ENCODE measurements at regions of chr16 and their contacts with region 1.

Region 1: GRCh38 chr16:47162670-47163420 is 19.1 kb upstream of the NETO2 start:
- DNase-seq: no peak
- ATAC-seq: no peak
- H3K4me3 ChIP-seq: no peak overlapping the region
- H3K27ac ChIP-seq: no peak overlapping the region
- H3K4me1 ChIP-seq: no peaks in the 10 kb centered on the region
- H3K27me3 ChIP-seq: no peaks in the 10 kb centered on the region
- CTCF ChIP-seq: peak in 3 of 9 donors; percentile 11 to 23 (median 12)

Region 2: GRCh38 chr16:47110939-47111338 is 51.9 kb before region 1 on chr16:
- intact Hi-C with region 1: no loop called
- DNase-seq: no peak
- ATAC-seq: no peak
- H3K4me3 ChIP-seq: no peak overlapping the region
- H3K27ac ChIP-seq: no peak overlapping the region
- H3K4me1 ChIP-seq: no peaks in the 10 kb centered on the region
- H3K27me3 ChIP-seq: no peaks in the 10 kb centered on the region
- CTCF ChIP-seq: no peak

Region 3: DNA sequence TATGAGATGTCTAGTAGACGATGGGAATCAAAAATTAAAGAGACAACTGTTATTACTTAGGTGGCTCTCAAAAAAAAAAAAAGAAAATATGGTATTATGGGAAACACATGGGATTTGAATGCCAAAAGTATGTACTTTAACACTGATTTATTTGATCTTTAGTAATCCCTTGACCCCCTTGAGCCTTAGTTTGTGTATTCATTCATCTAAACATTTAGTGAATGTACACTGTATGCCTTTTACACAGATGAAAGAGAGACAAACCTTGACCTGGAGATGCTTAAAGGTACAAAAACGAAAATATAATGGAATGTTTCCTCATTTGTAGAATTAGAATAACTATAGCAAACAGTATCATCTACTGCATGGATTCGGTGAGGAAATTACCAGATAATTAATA is 19.5 kb after region 1 on chr16:
- intact Hi-C with region 1: loop called in 1 of 10 experiments (anchors 2 kb)
- DNase-seq: no peak
- ATAC-seq: no peak
- H3K4me3 ChIP-seq: no peak overlapping the region
- H3K27ac ChIP-seq: no peak overlapping the region
- H3K4me1 ChIP-seq: no peaks in the 10 kb centered on the region
- H3K27me3 ChIP-seq: no peaks in the 10 kb centered on the region
- CTCF ChIP-seq: no peak

Measured in heart right ventricle (tissue), 16 donors.